ENCODE measurements at regions of chr20 and their contacts with region 1.

Region 1: GRCh38 chr20:53611449-53611894 is 17.8 kb upstream of the ZNF217 start:
- DNase-seq: peak in 2 of 9 experiments; percentile 7 to 41
- ATAC-seq: no peak
- H3K4me3 ChIP-seq: no peak overlapping the region
- H3K4me3 Mint-ChIP-seq: no peak overlapping the region
- H3K27ac ChIP-seq: no peak overlapping the region
- H3K27ac Mint-ChIP-seq: peak overlapping the region; percentile 62
- H3K4me1 ChIP-seq: peaks cover 21% of the 10 kb centered on the region
- H3K4me1 Mint-ChIP-seq: peaks cover 35% of the 10 kb centered on the region
- H3K27me3 ChIP-seq: no peaks in the 10 kb centered on the region
- H3K27me3 Mint-ChIP-seq: no peaks in the 10 kb centered on the region
- CTCF ChIP-seq: no peak

Region 2: DNA sequence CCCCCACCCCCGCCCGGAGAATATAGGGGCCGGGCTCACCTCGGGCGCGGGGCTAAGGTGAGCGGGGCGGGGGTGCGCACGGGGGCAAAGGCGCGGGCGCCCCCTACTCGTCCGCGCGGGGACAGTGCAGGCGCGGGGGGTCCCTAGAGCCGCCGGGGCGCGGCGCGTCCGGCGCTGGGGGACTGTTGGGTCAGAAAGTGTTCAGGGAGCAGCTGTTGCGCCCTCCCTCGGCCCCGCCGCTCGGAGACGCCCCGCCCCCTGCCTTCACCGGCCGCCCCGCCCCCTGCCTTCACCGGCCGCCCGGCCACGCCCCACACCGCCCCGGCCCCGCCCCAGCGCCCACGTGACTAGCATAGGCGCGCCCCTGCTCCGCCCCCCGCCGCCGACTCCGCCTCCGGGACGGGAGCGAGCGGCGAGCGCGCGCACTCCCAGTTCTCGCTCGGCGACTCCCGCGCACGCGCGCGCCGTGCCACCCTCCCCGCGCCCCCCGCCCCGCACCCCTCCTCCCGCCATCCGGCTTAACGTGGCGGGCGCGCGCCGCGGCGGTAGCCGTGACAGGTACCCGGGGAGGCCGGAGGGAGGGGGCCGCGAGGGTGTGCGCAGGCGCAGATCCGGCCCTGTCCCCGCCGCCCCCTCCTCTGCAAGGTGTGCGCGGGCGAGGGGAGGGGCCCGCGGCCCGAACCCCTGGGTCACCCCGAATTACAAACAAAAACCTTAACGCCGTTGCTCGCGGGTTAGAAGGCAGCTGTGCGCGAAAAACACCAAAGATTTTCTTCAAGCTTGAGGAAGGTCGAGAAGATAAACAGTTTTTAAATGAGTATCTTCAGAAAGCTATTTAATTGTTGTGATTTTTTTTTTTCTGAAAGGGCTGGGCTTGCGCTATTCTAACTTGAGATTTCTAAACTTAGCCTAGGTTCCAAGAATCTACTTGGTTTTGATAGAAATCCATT is 17.1 kb before region 1 on chr20:
- CTCF ChIA-PET with region 1: interaction called, 5 read pairs
- POLR2A ChIA-PET with region 1: interaction called, 24 read pairs
- intact Hi-C with region 1: loop called (anchors 1 kb)
- DNase-seq: peak; percentile 94 to 100 (median 98)
- ATAC-seq: peak; percentile 74
- H3K4me3 ChIP-seq: peak overlapping the region; percentile 67 to 83
- H3K4me3 Mint-ChIP-seq: peak overlapping the region; percentile 82
- H3K27ac ChIP-seq: peak overlapping the region; percentile 84 to 87
- H3K27ac Mint-ChIP-seq: peak overlapping the region; percentile 92
- H3K4me1 ChIP-seq: peaks cover 42% of the 10 kb centered on the region
- H3K4me1 Mint-ChIP-seq: peaks cover 59% of the 10 kb centered on the region
- H3K27me3 ChIP-seq: no peaks in the 10 kb centered on the region
- H3K27me3 Mint-ChIP-seq: no peaks in the 10 kb centered on the region
- CTCF ChIP-seq: no peak

Region 3: GRCh38 chr20:53623454-53624211 is 12.2 kb after region 1 on chr20:
- CTCF ChIA-PET with region 1: interaction called, 6 read pairs
- POLR2A ChIA-PET with region 1: interaction called, 53 read pairs
- intact Hi-C with region 1: loop called in 1 of 2 experiments (anchors 1 kb)
- DNase-seq: peak in 5 of 9 experiments; percentile 27 to 67 (median 35)
- ATAC-seq: peak; percentile 77
- H3K4me3 ChIP-seq: peak overlapping the region; percentile 32 to 38
- H3K4me3 Mint-ChIP-seq: peak overlapping the region; percentile 80
- H3K27ac ChIP-seq: peak overlapping the region; percentile 41 to 57
- H3K27ac Mint-ChIP-seq: peak overlapping the region; percentile 94
- H3K4me1 ChIP-seq: peaks cover 41% of the 10 kb centered on the region
- H3K4me1 Mint-ChIP-seq: peaks cover 43% of the 10 kb centered on the region
- H3K27me3 ChIP-seq: no peaks in the 10 kb centered on the region
- H3K27me3 Mint-ChIP-seq: no peaks in the 10 kb centered on the region
- CTCF ChIP-seq: no peak

Region 4: DNA sequence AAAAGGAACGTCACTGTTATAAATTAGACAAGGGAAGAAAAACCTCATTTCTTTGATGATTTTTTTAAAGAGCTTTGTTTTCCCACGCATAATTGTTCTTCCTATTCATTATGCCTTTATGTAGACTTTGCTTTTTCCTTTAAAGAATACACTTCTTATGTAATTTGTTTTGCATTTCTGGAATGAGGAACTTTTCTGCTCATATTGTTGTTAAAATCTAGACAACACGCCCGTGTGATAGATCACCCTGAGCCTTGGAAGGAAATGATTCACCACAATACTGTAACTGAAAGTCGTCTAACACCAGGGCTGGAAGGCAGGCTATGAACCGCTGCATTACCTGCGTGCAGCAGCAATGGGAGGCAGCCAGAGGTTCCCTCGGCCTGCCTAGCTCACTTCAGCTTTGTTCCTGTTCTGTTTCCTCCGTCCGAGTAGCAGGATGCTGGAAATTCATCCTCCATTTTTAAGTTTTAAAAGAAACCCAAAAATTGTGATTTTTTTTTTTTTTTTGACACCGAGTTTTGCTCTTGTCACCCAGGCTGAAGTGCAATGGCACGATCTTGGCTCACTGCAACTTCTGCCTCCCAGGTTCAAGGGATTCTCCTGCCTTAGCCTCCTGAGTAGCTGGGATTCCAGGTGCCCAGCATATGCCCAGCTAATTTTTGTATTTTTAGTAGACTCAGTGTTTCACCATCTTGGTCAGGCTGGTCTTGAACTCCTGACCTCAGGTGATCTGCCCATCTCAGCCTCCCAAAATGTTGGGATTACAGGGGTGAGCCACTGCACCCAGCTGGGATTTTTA is 31.8 kb after region 1 on chr20:
- CTCF ChIA-PET with region 1: interaction called, 3 read pairs
- POLR2A ChIA-PET with region 1: interaction called, 18 read pairs
- intact Hi-C with region 1: loop called (anchors 1 to 2 kb)
- DNase-seq: peak; percentile 39 to 88 (median 71)
- ATAC-seq: peak; percentile 93
- H3K4me3 ChIP-seq: peak overlapping the region; percentile 19 to 47
- H3K4me3 Mint-ChIP-seq: peak overlapping the region; percentile 68
- H3K27ac ChIP-seq: peak overlapping the region; percentile 67 to 80
- H3K27ac Mint-ChIP-seq: peak overlapping the region; percentile 92
- H3K4me1 ChIP-seq: peaks cover 37% of the 10 kb centered on the region
- H3K4me1 Mint-ChIP-seq: peaks cover 55% of the 10 kb centered on the region
- H3K27me3 ChIP-seq: no peaks in the 10 kb centered on the region
- H3K27me3 Mint-ChIP-seq: no peaks in the 10 kb centered on the region
- CTCF ChIP-seq: no peak

Region 5: GRCh38 chr20:53660078-53660909 is 48.8 kb after region 1 on chr20:
- CTCF ChIA-PET with region 1: interaction called, 4 read pairs
- POLR2A ChIA-PET with region 1: interaction called, 6 read pairs
- intact Hi-C with region 1: loop called in 1 of 2 experiments (anchors 5 kb)
- DNase-seq: peak in 6 of 9 experiments; percentile 10 to 68 (median 44)
- ATAC-seq: peak; percentile 47
- H3K4me3 ChIP-seq: peak overlapping the region; percentile 45 to 61
- H3K4me3 Mint-ChIP-seq: peak overlapping the region; percentile 87
- H3K27ac ChIP-seq: peak overlapping the region; percentile 49 to 67
- H3K27ac Mint-ChIP-seq: peak overlapping the region; percentile 94
- H3K4me1 ChIP-seq: peaks cover 53% of the 10 kb centered on the region
- H3K4me1 Mint-ChIP-seq: peaks cover 62% of the 10 kb centered on the region
- H3K27me3 ChIP-seq: no peaks in the 10 kb centered on the region
- H3K27me3 Mint-ChIP-seq: no peaks in the 10 kb centered on the region
- CTCF ChIP-seq: no peak